Psoas muscle (tissue), 8 donors: ENCODE measurements at regions of chr13 and their contacts with region 1.

Region 1: GRCh38 chr13:97493456-97493855 is 59.5 kb downstream of the RAP2A start:
- DNase-seq: no peak
- ATAC-seq: no peak
- H3K4me3 ChIP-seq: no peak overlapping the region
- H3K27ac ChIP-seq: no peak overlapping the region
- H3K4me1 ChIP-seq: no peaks in the 10 kb centered on the region
- H3K27me3 ChIP-seq: no peaks in the 10 kb centered on the region
- CTCF ChIP-seq: no peak

Region 2: DNA sequence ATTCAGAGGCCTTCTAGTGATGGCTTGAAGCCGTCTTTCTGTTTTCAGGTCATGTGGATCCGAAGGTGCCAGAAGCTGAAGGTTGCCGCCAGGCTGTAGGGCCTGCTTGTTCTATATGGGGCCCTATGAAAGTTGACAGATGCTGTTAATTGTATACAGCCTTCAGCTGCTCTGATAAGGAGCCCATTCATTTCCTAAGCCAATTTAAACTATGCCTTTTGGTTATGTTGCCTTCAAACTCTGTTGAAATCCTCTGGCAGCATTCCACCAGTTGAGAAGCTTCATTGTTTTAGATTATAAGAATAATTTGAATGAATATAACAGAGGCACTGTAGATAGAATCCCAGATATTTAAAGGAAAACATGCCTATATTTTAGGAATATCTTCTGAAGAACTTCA is 25.1 kb before region 1 on chr13:
- intact Hi-C with region 1: loop called in 1 of 2 experiments (anchors 1 kb)
- DNase-seq: no peak
- ATAC-seq: no peak
- H3K4me3 ChIP-seq: no peak overlapping the region
- H3K27ac ChIP-seq: no peak overlapping the region
- H3K4me1 ChIP-seq: no peaks in the 10 kb centered on the region
- H3K27me3 ChIP-seq: no peaks in the 10 kb centered on the region
- CTCF ChIP-seq: no peak

Region 3: DNA sequence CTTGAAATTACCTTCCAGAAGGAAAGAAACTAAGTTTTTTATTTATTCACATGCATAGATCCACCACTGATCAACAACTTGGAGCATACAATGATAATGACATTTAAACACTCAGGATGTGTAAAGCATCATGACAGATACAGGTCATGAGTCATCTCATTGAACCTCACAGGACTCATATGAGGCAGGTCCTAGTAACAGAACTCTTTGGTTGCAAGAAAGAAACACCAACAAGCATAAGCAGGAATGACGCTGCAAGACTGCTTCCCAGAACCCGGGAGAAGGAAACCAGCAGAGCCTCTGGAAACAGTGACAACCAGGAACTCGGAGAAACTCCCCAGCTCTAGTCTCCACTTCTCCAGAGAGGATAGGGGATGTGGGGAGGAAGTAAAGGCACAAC is 399.3 kb after region 1 on chr13:
- intact Hi-C with region 1: no loop called
- DNase-seq: no peak
- ATAC-seq: peak in 3 of 4 donors; percentile 70 to 89 (median 71)
- H3K4me3 ChIP-seq: no peak overlapping the region
- H3K27ac ChIP-seq: no peak overlapping the region
- H3K4me1 ChIP-seq: no peaks in the 10 kb centered on the region
- H3K27me3 ChIP-seq: no peaks in the 10 kb centered on the region
- CTCF ChIP-seq: no peak

Region 4: DNA sequence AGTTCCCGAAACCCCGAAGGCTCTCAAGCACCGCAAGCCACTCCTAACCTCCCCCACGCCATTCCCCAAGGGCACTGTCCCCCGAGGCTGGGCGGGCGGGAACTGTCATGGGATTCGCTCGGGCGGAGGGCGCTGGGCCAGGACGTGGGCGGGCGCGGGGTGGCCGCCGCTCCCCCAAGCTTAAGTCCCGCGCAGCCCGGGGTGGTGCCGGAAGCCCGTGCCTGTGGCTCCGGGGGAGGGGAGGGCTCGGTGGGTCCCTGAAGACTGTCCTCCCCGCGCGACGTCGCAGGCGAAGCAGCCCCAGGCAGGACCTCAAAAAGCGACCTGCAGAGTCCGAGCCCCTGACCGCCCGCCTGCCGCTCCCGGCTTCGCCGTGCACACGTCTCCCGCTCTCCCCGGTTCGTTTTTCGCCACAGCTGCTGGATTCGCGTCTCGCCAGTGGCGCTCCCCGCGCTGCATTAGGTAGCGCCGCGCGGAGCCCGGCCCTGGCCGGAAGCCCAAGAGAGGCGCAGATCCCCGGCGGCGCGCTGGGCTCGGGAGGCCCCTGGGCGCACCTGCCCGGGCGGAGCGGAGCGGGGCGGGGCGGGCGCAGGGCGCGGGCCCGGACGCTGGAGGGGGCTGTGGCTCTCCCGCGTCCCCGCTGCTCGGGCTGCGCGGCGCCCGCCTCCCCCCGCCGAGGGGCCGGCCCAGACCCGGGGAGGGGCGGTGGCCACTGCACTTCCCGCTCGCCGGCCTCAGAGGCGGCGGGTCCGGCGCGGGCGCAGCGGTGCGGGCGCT is 649.1 kb after region 1 on chr13 and contains the start of gene FARP1:
- intact Hi-C with region 1: no loop called
- DNase-seq: peak; percentile 76 to 81
- ATAC-seq: peak; percentile 92 to 94 (median 93)
- H3K4me3 ChIP-seq: peak within 1 kb of the TSS; percentile 75
- H3K27ac ChIP-seq: peak within 1 kb of the TSS; percentile 65
- H3K4me1 ChIP-seq: peaks cover 9% of the 10 kb centered on the region
- H3K27me3 ChIP-seq: peaks cover 0 to 16% (median 0%) of the 10 kb centered on the region in 3 donors
- CTCF ChIP-seq: peak; percentile 47
- total RNA-seq, gene FARP1: 9.2 to 19.4 (median 13.0) TPM